ENCODE measurements at regions of chr11 and their contacts with region 1.

Region 1: DNA sequence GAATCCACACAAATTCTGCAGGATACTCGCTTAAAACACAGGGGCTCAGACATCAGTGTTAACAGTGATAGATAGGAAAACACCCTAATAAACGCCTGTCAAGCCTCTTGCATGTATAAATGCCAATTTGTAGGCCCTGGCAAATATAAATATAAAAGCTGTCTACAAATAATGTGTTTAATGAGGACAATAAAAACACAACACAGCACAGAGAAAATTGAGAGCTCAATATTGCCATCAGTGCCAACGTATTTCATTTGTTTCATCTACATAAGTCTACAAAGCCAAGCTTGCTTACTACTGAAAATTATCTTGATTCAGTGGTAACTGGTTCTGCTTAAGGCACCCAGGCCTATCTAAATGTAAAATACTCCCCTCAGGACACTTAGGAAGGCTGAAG is 1387.0 kb upstream of the TENM4 start:
- DNase-seq: no peak
- ATAC-seq: no peak
- H3K4me3 ChIP-seq: no peak overlapping the region
- H3K27ac ChIP-seq: no peak overlapping the region
- H3K4me1 ChIP-seq: no peaks in the 10 kb centered on the region
- H3K27me3 ChIP-seq: no peaks in the 10 kb centered on the region
- CTCF ChIP-seq: no peak
- POLR2A ChIP-seq: no peak
- RAD21 ChIP-seq: no peak

Region 2: GRCh38 chr11:80862010-80862409 is 34.2 kb after region 1 on chr11:
- CTCF ChIA-PET with region 1: no interaction called
- POLR2A ChIA-PET with region 1: no interaction called
- dilution Hi-C with region 1: no loop called
- in situ Hi-C with region 1: no loop called
- intact Hi-C with region 1: loop called (anchors 1 kb)
- DNase-seq: no peak
- ATAC-seq: no peak
- H3K4me3 ChIP-seq: no peak overlapping the region
- H3K27ac ChIP-seq: no peak overlapping the region
- H3K4me1 ChIP-seq: no peaks in the 10 kb centered on the region
- H3K27me3 ChIP-seq: no peaks in the 10 kb centered on the region
- CTCF ChIP-seq: no peak
- POLR2A ChIP-seq: no peak
- RAD21 ChIP-seq: no peak